ENCODE measurements at regions of chr11 and their contacts with region 1.

Region 1: DNA sequence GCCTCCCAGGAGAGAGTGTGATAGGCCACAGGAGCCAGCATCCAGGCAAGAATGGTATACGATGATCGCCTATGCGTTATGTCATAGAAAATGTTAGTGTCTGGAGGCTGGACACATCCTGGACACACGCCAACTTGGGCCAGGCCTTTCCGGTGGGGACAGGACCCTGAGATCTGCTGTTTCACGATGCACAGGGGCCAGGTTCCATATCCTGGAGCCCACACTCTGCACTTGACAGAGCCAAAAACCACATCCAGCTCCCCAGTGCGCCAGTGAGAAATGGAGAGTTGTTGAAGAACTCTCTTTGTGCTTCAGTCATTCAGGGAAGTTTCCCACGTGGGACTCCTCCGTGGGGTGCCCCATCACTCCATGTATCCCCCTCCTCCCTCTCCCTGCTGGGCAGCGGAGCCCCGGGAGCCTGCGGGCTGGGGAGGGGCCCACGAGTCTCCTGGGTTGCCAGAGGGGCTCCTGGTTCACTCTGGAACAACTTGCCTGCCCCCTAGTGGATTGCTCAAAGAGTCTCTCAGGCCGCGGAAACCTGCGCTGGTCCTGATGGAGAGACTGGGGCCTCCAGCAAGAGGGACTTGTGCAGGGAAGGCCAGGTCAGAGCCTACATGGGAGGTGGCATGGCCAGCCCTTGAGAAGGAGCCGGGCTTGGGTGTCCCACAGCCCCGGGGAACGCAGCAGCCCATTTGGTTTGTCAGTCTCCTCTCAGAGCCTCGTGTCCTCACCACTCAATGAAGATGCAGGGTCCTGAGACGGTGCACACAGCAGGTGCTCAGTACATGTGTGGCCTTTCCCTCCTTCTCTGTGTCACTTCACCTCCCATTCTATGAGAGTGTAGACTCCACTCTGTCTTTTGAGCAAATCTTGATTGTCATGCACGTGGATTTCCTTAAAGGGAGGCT is 10.2 kb upstream of the LRRC32 start:
- DNase-seq: peak; percentile 80
- H3K4me3 Mint-ChIP-seq: no peak overlapping the region
- H3K27ac Mint-ChIP-seq: no peak overlapping the region
- H3K4me1 Mint-ChIP-seq: no peaks in the 10 kb centered on the region
- H3K27me3 Mint-ChIP-seq: peaks cover 81% of the 10 kb centered on the region
- CTCF ChIP-seq: peak; percentile 74

Region 2: GRCh38 chr11:76551400-76551799 is 129.4 kb before region 1 on chr11:
- CTCF ChIA-PET with region 1: no interaction called
- intact Hi-C with region 1: loop called (anchors 1 kb)
- DNase-seq: no peak
- H3K4me3 Mint-ChIP-seq: no peak overlapping the region
- H3K27ac Mint-ChIP-seq: no peak overlapping the region
- H3K4me1 Mint-ChIP-seq: no peaks in the 10 kb centered on the region
- H3K27me3 Mint-ChIP-seq: no peaks in the 10 kb centered on the region
- CTCF ChIP-seq: no peak